ENCODE measurements at regions of chr5 and their contacts with region 1.

Region 1: DNA sequence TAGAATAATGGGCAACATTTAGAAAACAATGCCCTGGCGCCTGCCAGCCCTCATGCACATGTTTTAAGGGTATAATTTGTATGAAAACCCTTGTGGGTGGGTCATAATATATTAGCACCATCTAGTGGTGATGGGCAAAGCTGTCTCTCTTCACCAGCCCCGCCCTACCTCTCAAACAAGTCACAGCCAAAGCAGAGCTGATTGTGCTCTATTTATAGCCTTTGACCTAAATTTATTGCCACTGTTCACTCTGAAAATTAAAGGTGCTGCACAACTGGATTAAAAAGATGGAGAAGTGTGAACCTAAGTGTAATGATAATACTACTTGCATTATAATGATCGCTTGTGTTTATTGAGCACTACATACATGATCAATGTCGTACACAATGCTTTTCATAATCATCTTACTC is 131.9 kb upstream of the ANKH start:
- DNase-seq: peak; percentile 21
- H3K4me3 ChIP-seq: no peak overlapping the region
- H3K27me3 ChIP-seq: peaks cover 7% of the 10 kb centered on the region
- CTCF ChIP-seq: peak; percentile 77

Region 2: DNA sequence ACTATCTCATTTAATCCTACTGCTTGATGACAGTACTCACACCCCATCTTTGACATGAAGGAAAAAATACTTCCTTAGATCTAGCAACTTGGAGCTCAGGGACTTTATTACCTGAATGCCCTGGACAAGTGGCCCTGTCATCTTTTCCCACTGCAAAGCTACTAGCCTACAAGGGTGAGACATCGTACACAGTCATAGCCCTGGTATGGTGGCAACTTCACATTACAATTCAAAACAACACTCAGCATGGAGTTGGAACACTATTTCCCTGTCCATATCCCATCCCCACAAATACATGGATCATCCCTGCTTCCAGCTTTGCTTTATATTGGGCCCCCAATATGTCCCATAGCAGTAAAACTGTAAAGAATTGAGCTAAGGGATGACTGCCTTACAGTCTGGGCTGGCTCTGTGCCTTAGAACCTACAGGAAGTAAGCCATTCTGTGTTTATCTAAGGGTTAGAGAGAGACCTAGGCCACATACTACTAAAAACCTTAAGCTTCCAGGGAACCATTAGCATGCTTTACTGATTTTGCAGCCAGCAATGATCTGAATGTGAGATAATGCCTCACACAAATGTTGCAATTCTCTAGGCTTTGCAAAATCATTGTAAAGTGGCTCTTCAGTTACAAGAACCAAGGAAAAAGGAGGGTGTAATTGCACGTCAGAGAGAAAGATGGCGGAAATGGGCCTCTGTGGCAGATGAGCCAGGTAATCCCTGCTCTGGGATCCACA is 283.1 kb before region 1 on chr5:
- CTCF ChIA-PET with region 1: interaction called, 92 read pairs
- POLR2A ChIA-PET with region 1: interaction called, 12 read pairs
- DNase-seq: no peak
- H3K4me3 ChIP-seq: no peak overlapping the region
- H3K27me3 ChIP-seq: no peaks in the 10 kb centered on the region
- CTCF ChIP-seq: no peak

Region 3: DNA sequence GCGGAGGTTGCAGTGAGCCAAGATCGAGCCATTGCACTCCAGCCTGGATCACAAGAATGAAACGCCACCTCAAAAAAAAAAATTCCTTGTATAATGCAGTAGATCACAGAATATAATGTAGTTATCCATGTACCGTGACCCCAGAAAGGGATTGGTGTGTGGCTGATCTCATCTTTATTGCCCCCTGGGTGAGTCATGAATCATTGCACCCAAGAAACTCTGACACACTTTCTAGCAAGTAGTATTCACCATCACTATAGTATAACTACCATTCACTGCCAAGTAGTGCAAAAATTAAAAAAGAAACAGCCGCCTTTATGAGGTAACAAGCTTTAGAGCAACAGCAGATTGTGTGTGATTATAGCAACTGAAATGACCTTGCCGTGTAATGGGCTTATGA is 108.2 kb before region 1 on chr5:
- CTCF ChIA-PET with region 1: no interaction called
- POLR2A ChIA-PET with region 1: no interaction called
- DNase-seq: no peak
- H3K4me3 ChIP-seq: no peak overlapping the region
- H3K27me3 ChIP-seq: peaks cover 4% of the 10 kb centered on the region; the same call in 1 of the 2 replicates
- CTCF ChIP-seq: no peak

Region 4: DNA sequence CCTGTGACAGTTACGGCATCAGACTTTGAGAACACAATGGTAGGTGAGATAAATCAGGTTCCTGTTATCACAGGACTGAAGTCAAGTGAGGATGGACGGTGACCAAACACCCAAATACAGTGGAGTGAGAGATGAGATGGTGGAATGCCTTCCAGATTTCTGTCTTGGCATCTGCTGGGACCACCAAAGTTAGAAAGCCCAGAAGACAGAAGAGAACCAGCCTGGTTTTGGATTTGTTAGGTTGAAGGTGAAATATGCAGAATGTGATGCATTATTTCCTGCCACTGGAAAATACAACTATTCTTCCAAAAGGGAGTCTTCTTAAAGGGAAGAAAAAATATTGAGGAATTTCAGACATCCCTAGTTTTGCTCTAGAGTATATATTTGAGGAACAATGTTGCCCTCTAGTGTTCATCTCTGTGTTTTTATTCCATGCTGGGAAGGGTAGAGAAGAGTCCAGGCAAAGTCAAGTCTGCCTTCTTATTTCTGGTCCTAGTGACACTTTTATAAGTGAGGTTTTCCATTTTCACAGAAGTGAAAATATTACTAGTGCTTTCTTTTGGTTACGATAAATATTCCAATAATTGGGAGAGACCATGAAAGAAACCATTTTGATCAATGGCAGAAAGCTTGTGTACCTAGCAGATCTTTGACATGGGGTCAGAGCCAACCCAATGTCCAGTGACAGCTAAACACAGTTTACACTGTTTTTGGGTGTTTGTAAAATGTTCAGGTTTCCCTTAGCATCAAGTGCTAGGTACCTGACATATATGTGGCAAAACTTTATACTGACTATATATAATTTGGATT is 10.3 kb after region 1 on chr5:
- CTCF ChIA-PET with region 1: interaction called, 14 read pairs
- POLR2A ChIA-PET with region 1: no interaction called
- DNase-seq: peak; percentile 24
- H3K4me3 ChIP-seq: no peak overlapping the region
- H3K27me3 ChIP-seq: no peaks in the 10 kb centered on the region
- CTCF ChIP-seq: peak; percentile 58

Measured in BJ (cell line).